AG04450 (cell line): ENCODE measurements at regions of chr6 and their contacts with region 1.

Region 1: GRCh38 chr6:116087437-116088027 is 13.1 kb upstream of the NT5DC1 start:
- DNase-seq: no peak
- H3K4me3 ChIP-seq: no peak overlapping the region
- H3K27ac ChIP-seq: peak overlapping the region; percentile 60
- H3K27me3 ChIP-seq: no peaks in the 10 kb centered on the region
- CTCF ChIP-seq: peak; percentile 25

Region 2: DNA sequence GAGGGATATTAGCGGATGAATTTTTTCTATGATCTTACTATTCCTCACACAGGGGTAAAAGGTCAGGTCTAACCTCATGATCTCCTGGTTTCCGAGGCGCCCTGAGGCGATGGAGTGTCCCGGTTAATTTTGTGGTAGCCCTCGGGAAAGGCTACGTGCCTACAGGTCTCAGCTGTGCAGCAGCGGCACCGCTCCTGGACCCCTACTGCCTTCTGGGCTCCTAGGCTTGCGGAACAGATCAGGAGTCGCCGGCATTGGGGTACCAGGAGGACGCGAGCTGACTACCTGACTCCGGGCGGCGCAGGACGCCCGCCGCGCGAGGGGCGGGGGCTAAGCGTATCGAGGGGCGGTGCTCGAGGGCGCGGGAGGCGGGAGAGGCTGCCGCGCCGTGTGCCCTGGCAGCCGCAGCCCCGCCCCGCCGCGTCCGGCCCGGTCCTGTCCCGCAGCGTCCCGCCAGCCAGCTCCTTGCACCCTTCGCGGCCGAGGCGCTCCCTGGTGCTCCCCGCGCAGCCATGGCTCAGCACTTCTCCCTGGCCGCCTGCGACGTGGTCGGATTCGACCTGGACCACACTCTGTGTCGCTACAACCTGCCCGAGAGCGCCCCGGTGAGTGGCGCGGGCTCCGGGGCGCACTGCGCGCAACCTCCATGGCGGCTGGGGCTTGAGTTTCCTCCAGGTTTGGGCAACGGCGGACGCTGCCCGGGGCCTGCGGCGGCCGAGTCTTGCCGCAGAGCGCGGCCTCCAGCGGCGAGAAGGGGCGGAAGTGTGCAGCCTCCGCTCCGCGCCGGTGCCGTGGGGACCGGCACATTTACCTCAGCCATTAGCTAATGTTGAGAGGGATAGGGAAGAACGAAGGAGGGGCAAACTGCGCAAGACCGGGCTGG is 13.1 kb after region 1 on chr6 and contains the start of gene NT5DC1:
- CTCF ChIA-PET with region 1: interaction called, 17 read pairs
- POLR2A ChIA-PET with region 1: no interaction called
- DNase-seq: no peak
- H3K4me3 ChIP-seq: peak within 1 kb of the TSS; percentile 89
- H3K27ac ChIP-seq: peak within 1 kb of the TSS; percentile 65
- H3K27me3 ChIP-seq: no peaks in the 10 kb centered on the region
- CTCF ChIP-seq: peak; percentile 31
- polyA plus RNA-seq, gene NT5DC1: 20.9 and 23.2 TPM in 2 replicates